Activated T-helper 2 cell treated with anti-CD3 and anti-CD28 coated beads, Interferon-gamma antibody, Interleukin-2, Interleukin-4, amounts not matched to agents 10 μg/mL and 5 μg/mL and 100 μg/mL, durations not matched to agents 14 hours and 24 hours and 36 hours (primary cell): ENCODE measurements at regions of chr11 and their contacts with region 1.

Region 1: DNA sequence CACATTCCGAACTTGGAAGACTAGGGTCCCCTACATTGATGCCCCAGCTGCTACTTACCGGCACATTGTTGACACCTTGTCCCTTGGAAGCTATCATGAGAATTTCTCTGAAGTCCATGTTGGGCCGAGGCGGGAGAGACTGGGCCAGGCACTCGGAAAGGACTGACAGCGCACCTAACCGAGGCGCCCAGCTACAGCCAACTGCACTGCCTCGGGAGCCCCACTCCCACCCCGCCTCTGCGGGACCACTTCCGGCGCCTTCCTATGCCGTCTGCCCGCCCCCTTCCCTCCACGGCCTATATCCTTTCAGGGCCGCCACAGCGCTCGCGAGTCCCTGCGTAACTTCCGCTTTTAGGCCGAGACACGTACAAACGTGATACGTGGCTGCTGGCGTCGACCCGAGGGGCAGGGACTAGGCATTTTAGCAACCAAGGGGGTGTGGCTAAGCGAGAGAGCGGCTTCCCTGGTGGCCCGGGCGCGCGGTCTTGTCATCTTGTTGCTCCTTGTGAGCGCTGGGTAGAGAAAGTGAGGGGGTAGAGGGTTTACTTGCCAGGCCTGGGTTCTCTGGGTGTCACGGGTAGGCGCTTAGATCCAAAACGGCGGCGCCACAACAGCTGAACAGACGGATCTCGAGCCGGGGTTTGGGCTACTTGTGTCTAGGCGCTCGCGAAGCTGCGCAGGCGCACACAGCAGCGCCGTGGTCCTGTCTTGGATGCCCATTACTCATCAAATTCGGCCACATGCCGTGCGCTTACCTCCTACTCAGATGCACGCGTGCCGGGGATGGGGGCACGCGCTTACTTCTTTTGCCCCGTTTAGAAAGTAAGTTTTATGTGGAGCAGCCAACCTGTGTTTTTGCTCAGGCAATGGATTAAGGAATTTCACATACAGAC is at the start of gene SPTY2D1:
- DNase-seq: peak; percentile 98
- H3K4me3 Mint-ChIP-seq: peak within 1 kb of the TSS; percentile 97
- H3K27ac Mint-ChIP-seq: peak within 1 kb of the TSS; percentile 93
- H3K4me1 Mint-ChIP-seq: peaks cover 22% of the 10 kb centered on the region
- H3K27me3 Mint-ChIP-seq: peaks cover 3% of the 10 kb centered on the region
- total RNA-seq, gene SPTY2D1: 26.5 and 29.0 TPM in 2 replicates

Region 2: GRCh38 chr11:18012863-18013781 is 621.3 kb before region 1 on chr11 and contains the start of gene SERGEF:
- intact Hi-C with region 1: loop called (anchors 10 kb)
- DNase-seq: peak; percentile 93
- H3K4me3 Mint-ChIP-seq: peak within 1 kb of the TSS; percentile 99
- H3K27ac Mint-ChIP-seq: peak within 1 kb of the TSS; percentile 91
- H3K4me1 Mint-ChIP-seq: peaks cover 33% of the 10 kb centered on the region
- H3K27me3 Mint-ChIP-seq: no peaks in the 10 kb centered on the region
- total RNA-seq, gene SERGEF: 39.5 and 43.9 TPM in 2 replicates

Region 3: GRCh38 chr11:18321980-18322711 is 312.2 kb before region 1 on chr11 and contains the starts of genes GTF2H1 and HPS5:
- intact Hi-C with region 1: loop called (anchors 1 kb)
- DNase-seq: peak; percentile 93
- H3K4me3 Mint-ChIP-seq: peak within 1 kb of the TSS; percentile 92
- H3K27ac Mint-ChIP-seq: peak within 1 kb of the TSS; percentile 98
- H3K4me1 Mint-ChIP-seq: peaks cover 57% of the 10 kb centered on the region
- H3K27me3 Mint-ChIP-seq: no peaks in the 10 kb centered on the region
- total RNA-seq, gene GTF2H1: 51.4 and 54.3 TPM in 2 replicates
- total RNA-seq, gene HPS5: 33.3 and 34.2 TPM in 2 replicates

Region 4: GRCh38 chr11:18395735-18396504 is 238.5 kb before region 1 on chr11:
- intact Hi-C with region 1: loop called (anchors 1 kb)
- DNase-seq: peak; percentile 97
- H3K4me3 Mint-ChIP-seq: peak overlapping the region; percentile 97
- H3K27ac Mint-ChIP-seq: peak overlapping the region; percentile 95
- H3K4me1 Mint-ChIP-seq: peaks cover 45% of the 10 kb centered on the region
- H3K27me3 Mint-ChIP-seq: no peaks in the 10 kb centered on the region

Region 5: DNA sequence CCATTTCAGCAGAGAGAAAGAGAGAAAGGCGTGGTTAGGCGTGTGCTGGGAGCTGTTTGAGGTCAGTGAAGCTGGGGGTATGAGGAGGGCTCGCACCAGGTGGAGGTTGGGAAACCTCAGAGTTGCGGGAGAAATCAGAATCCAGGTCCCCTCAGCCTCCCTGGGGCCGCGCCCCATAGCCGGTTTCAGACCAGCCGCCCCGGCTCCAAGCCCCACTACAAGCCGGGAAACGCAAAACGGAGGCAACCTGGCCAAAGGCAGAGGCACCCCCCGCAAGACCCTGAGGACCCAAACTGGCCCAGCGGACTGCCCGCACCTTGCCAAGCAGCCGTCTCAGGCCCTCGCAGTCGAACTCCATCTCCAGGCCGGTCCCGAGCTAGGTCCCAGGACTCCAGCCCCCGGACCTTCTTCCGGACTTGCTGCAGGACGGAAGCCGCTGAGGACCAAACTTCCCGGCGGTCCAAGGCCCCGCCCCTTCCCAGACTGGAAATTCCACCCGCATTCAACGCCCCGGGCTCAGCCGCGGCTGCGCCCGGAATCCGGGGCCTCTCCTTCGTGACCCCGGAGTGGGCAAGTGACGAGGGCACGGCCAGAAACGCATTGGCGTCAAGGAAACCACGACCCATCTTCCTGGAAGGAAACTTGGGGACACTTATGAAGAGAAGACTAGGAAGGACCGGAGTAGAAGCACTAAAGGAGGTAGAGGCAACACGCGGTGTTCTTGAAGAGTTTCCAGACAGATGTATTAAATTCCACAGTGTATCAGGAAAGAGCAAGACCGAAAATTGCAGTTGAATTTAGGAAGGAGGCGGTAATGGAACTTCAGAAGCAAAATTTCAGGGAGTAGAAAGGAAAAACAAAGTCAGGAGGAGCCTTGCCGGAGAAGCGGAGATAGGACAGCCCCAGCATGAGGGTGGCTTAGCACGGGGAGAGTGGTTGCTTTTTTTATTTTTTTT is 45.8 kb before region 1 on chr11 and contains the start of gene UEVLD:
- intact Hi-C with region 1: loop called (anchors 1 kb)
- DNase-seq: peak; percentile 62
- H3K4me3 Mint-ChIP-seq: no peak within 1 kb of the TSS
- H3K27ac Mint-ChIP-seq: no peak within 1 kb of the TSS
- H3K4me1 Mint-ChIP-seq: peaks cover 9% of the 10 kb centered on the region
- H3K27me3 Mint-ChIP-seq: no peaks in the 10 kb centered on the region
- total RNA-seq, gene UEVLD: 26.4 and 32.7 TPM in 2 replicates

Region 6: DNA sequence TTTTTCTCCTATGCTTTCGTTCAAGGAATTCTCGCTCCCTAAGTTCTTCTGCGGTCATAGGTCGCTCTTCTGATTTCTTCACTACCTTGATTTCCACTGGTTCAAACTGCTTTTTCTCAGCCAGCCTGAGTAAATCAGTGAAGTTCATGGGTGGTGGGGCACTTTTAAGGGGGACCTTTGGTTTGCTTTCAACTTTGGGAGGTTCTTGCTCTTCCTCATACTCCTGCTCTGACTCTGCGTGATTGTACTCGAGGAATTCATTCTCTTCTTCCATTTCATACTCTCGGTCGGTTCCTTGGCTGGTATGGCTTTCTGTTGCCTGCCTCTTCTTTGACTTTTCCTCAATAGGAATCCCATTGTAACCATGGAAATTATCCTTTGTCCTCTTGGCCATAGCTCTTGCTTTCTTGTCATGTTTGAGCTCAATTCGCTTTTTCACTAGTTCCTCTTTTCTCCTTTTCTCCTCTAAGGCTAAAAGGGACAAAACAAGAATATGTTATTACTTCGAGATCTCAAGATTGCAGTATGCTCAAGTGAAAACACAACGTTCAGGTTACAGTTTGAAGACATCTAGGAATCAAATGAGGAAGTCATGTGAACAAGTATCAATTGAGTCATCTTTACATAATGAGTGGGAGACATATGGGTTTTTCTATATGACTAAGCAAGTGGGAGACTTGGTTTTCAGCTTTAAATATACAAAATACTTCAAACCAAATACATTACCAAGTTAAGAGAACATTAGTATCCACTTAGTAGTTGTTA is 18.6 kb before region 1 on chr11:
- intact Hi-C with region 1: loop called (anchors 1 kb)
- DNase-seq: no peak
- H3K4me3 Mint-ChIP-seq: peak overlapping the region; percentile 43
- H3K27ac Mint-ChIP-seq: peak overlapping the region; percentile 66
- H3K4me1 Mint-ChIP-seq: peaks cover 45% of the 10 kb centered on the region
- H3K27me3 Mint-ChIP-seq: no peaks in the 10 kb centered on the region

Region 7: DNA sequence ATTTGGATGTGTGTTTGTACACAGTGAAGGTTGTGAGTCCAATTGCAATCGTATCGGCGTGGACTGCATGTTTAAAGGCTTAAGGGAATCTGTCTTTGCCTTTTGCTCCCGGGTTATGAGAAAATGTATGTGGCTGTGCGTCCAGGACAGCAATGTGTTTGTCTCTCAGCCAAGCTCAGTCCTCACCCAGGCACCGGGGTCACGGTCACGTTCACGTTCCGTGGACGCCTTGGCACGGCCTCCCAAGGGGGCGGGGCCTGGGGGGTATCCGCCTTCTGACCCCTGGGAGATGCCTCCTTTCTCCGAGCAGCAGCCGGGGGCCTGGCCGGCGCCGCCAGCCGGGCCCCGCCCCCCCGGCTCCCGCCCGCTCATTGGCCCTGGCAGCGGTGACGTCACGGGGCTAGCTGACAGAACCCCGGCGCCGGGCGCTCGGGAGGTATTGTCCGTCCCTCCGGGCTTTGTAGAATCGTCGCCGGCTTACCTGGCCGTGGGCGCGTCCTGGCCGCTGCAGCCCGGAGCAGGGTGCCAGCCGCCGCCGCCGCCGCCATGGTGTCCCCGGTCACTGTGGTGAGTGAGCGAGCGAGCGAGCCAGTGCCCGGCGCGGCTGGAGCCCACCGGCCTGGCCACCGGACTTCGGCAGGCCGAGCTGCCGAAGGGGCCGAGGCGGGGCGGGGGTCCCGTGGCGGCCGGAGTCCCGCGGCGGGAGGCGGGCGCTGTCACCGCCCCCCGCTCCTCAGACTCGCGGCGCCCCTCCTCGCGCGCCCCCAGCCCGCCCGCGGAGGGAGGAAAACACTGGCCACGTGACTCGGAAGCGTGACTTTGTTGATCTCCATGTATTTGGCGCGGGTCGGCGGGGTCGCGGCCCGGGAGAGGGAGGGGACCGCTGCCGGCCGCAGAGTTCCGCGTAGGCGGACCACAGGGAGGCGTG is 64.2 kb after region 1 on chr11 and contains the start of gene TMEM86A:
- intact Hi-C with region 1: loop called (anchors 1 kb)
- DNase-seq: peak; percentile 83
- H3K4me3 Mint-ChIP-seq: peak within 1 kb of the TSS; percentile 66
- H3K27ac Mint-ChIP-seq: no peak within 1 kb of the TSS
- H3K4me1 Mint-ChIP-seq: peaks cover 12% of the 10 kb centered on the region
- H3K27me3 Mint-ChIP-seq: peaks cover 31% of the 10 kb centered on the region
- total RNA-seq, gene TMEM86A: 0.11 and 0.55 TPM in 2 replicates